ENCODE measurements at regions of chr2 and their contacts with region 1.

Region 1: GRCh38 chr2:30115141-30115980 is 31.4 kb upstream of the YPEL5 start:
- DNase-seq: peak; percentile 79
- H3K4me3 ChIP-seq: no peak overlapping the region
- H3K27ac ChIP-seq: no peak overlapping the region
- H3K4me1 ChIP-seq: peaks cover 10% of the 10 kb centered on the region
- CTCF ChIP-seq: peak; percentile 97

Region 2: DNA sequence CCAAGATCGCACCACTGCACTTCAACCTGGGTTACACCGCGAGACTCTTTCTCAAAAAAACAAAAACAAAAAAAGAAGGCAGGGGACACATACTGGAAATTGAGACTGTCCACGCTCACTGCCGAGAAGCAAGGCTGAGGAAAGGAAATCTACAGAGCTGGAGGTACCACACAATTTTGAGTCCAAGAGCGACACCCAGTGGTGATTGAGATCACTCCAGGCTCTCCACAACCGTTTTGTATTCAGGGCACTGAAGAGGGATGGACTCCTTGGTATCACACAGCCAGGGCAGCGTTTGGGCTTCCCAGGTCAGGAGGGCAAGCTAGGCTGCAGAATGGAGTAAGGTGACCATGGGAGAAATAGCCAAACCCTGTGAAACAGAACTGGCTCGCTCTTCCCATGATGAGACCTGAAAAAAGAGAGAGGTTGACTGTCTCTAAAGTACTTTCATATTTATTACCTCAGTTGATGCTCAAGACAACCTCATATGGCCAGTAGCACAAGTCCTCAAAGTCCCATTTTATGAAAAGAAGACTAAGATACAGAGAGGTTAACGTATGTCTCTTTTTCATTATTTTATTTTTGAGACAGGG is 43.0 kb before region 1 on chr2:
- CTCF ChIA-PET with region 1: no interaction called
- POLR2A ChIA-PET with region 1: no interaction called
- intact Hi-C with region 1: loop called (anchors 1 kb)
- DNase-seq: peak; percentile 70
- H3K4me3 ChIP-seq: no peak overlapping the region
- H3K27ac ChIP-seq: no peak overlapping the region
- H3K4me1 ChIP-seq: no peaks in the 10 kb centered on the region
- CTCF ChIP-seq: peak; percentile 82